ENCODE measurements at regions of chr3 and their contacts with region 1.

Region 1: GRCh38 chr3:40505599-40506462 is at the start of gene ZNF620:
- DNase-seq: peak; percentile 59
- H3K4me3 Mint-ChIP-seq: peak within 1 kb of the TSS; percentile 91
- H3K27ac Mint-ChIP-seq: peak within 1 kb of the TSS; percentile 72
- H3K4me1 Mint-ChIP-seq: peaks cover 17% of the 10 kb centered on the region
- H3K27me3 Mint-ChIP-seq: no peaks in the 10 kb centered on the region
- total RNA-seq, gene ZNF620: 2.9 to 3.7 TPM

Region 2: GRCh38 chr3:40465456-40465855 is 40.4 kb before region 1 on chr3:
- CTCF ChIA-PET with region 1: no interaction called
- POLR2A ChIA-PET with region 1: no interaction called
- intact Hi-C with region 1: no loop called
- DNase-seq: no peak
- H3K4me3 Mint-ChIP-seq: no peak overlapping the region
- H3K27ac Mint-ChIP-seq: no peak overlapping the region
- H3K4me1 Mint-ChIP-seq: peaks cover 24% of the 10 kb centered on the region
- H3K27me3 Mint-ChIP-seq: no peaks in the 10 kb centered on the region

Region 3: GRCh38 chr3:40476478-40477470 is 29.1 kb before region 1 on chr3 and contains the start of gene ZNF619:
- CTCF ChIA-PET with region 1: interaction called, 4 read pairs
- POLR2A ChIA-PET with region 1: interaction called, 4 read pairs
- intact Hi-C with region 1: loop called (anchors 2 kb)
- DNase-seq: peak; percentile 66
- H3K4me3 Mint-ChIP-seq: peak within 1 kb of the TSS; percentile 84
- H3K27ac Mint-ChIP-seq: peak within 1 kb of the TSS; percentile 67
- H3K4me1 Mint-ChIP-seq: peaks cover 12% of the 10 kb centered on the region
- H3K27me3 Mint-ChIP-seq: no peaks in the 10 kb centered on the region
- total RNA-seq, gene ZNF619: 7.4 to 8.3 TPM